ENCODE measurements at regions of chr2 and their contacts with region 1.

Region 1: DNA sequence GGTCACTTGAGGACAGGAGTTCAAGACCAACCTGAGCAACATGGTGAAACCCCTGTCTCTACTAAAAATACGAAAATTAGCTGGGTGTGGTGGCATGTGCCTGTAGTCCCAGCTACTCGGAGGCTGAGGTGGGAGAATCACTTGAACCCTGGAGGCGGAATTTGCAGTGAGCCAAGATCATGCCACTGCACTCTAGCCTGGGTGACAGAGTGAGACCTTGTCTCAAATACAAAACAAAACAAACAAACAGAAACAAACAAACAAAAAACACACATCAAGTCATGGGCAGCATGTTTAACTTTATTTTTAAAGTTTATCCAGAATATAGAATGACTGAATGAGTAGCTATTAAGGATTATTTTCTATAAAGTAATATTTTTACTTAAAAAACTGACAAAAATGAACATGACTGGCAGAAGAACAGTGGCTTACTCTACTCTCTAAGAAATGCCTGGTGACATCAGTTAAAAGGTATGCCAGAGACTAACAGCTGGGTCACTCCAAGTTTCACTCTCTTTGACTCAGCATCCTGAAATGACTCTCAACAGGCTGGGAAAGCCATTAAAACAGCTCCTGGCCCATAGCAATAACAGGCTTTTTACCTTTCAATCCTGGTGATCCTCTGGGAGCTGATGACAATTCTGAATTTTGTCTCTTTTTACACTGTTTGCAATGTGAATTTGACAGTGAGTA is 281.6 kb upstream of the STON1 start:
- DNase-seq: no peak
- H3K4me3 Mint-ChIP-seq: no peak overlapping the region
- H3K27ac Mint-ChIP-seq: no peak overlapping the region
- H3K4me1 Mint-ChIP-seq: peaks cover 9% of the 10 kb centered on the region
- H3K27me3 Mint-ChIP-seq: peaks cover 5% of the 10 kb centered on the region

Region 2: GRCh38 chr2:48107326-48107925 is 141.0 kb before region 1 on chr2:
- intact Hi-C with region 1: no loop called
- DNase-seq: no peak
- H3K4me3 Mint-ChIP-seq: no peak overlapping the region
- H3K27ac Mint-ChIP-seq: no peak overlapping the region
- H3K4me1 Mint-ChIP-seq: peaks cover 29% of the 10 kb centered on the region
- H3K27me3 Mint-ChIP-seq: peaks cover 5% of the 10 kb centered on the region

Region 3: GRCh38 chr2:48313036-48313877 is 64.9 kb after region 1 on chr2:
- intact Hi-C with region 1: loop called (anchors 1 kb)
- DNase-seq: no peak
- H3K4me3 Mint-ChIP-seq: peak overlapping the region; percentile 83
- H3K27ac Mint-ChIP-seq: peak overlapping the region; percentile 98
- H3K4me1 Mint-ChIP-seq: peaks cover 24% of the 10 kb centered on the region
- H3K27me3 Mint-ChIP-seq: no peaks in the 10 kb centered on the region

Measured in activated T-helper 2 cell treated with anti-CD3 and anti-CD28 coated beads, Interferon-gamma antibody, Interleukin-2, Interleukin-4, amounts not matched to agents 10 μg/mL and 5 μg/mL and 100 μg/mL, durations not matched to agents 14 hours and 24 hours and 36 hours (primary cell).